Pancreas (tissue), 10 donors: ENCODE measurements at regions of chr16 and their contacts with region 1.

Region 1: DNA sequence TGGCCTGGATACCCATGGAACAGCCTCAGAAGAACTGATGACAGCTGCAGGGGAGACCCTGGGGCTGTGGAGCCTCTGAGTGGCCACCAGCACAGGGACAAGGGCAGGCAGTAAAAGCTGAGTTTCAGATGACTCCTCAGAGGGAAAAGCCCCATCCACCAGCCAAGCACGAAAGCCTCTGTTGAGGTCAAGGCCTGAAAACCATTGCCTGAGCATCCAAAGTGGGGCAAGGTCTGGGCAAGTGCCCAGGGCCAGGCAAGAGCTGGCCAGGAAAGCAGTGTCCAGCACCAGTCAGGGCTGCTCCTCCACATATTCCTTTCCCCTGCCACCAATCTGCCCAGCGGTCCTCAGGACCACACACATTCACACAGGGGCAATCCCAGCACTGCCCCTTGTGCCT is 16.4 kb downstream of the ATP6V0D1 start:
- DNase-seq: no peak
- ATAC-seq: no peak
- H3K4me3 ChIP-seq: no peak overlapping the region
- H3K27ac ChIP-seq: no peak overlapping the region
- H3K4me1 ChIP-seq: peaks cover 27 to 41% (median 33%) of the 10 kb centered on the region in 3 donors
- H3K27me3 ChIP-seq: no peaks in the 10 kb centered on the region
- CTCF ChIP-seq: no peak

Region 2: DNA sequence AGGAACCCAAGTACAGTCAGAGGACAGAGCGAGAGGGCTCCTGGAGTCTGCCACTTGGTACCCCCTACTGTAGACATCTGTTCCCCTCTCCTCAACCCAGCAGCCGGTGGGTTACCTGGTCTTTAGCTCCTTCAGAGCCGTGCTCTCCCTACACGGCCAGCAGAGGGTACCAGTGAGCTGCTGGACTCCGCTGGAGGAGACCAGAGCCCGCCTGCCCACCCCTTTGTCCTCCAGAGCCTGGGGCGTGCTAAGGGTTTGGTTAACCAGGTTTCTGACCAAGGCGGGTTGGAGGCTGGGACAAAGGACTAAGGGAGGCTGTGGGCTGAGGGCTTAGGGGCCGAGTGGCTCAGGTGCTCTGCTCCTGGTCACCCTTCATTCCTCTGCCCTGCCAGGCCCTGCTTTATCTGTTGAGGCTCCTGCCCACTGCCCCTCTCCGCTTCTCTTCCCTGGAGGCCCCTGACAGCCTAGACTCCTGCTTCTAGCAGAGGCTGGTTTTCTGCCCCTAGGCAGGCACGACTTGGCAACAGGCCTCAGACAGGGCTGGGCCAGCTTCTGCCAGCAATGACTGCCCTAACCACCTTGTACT is 36.3 kb before region 1 on chr16:
- intact Hi-C with region 1: loop called in 2 of 3 experiments (anchors 2 to 5 kb)
- DNase-seq: peak; percentile 65 to 91 (median 84)
- ATAC-seq: peak; percentile 44 to 79 (median 70)
- H3K4me3 ChIP-seq: no peak overlapping the region
- H3K27ac ChIP-seq: no peak overlapping the region
- H3K4me1 ChIP-seq: peaks cover 20 to 34% (median 26%) of the 10 kb centered on the region in 3 donors
- H3K27me3 ChIP-seq: no peaks in the 10 kb centered on the region
- CTCF ChIP-seq: peak; percentile 80 to 92 (median 84)

Region 3: GRCh38 chr16:67674851-67675608 is 210.5 kb after region 1 on chr16:
- intact Hi-C with region 1: no loop called
- DNase-seq: peak in 2 of 6 donors; percentile 14 to 58
- ATAC-seq: peak in 2 of 4 donors; percentile 39 to 43
- H3K4me3 ChIP-seq: no peak overlapping the region
- H3K27ac ChIP-seq: peak overlapping the region in 3 of 4 donors; percentile 25 to 88 (median 82)
- H3K4me1 ChIP-seq: peaks cover 5 to 16% (median 9%) of the 10 kb centered on the region in 3 donors
- H3K27me3 ChIP-seq: no peaks in the 10 kb centered on the region
- CTCF ChIP-seq: no peak